HEK293T (cell line): ENCODE measurements at regions of chr2 and their contacts with region 1.

Region 1: GRCh38 chr2:24827321-24828237 is 34.4 kb downstream of the CENPO start:
- DNase-seq: peak; percentile 81

Region 2: DNA sequence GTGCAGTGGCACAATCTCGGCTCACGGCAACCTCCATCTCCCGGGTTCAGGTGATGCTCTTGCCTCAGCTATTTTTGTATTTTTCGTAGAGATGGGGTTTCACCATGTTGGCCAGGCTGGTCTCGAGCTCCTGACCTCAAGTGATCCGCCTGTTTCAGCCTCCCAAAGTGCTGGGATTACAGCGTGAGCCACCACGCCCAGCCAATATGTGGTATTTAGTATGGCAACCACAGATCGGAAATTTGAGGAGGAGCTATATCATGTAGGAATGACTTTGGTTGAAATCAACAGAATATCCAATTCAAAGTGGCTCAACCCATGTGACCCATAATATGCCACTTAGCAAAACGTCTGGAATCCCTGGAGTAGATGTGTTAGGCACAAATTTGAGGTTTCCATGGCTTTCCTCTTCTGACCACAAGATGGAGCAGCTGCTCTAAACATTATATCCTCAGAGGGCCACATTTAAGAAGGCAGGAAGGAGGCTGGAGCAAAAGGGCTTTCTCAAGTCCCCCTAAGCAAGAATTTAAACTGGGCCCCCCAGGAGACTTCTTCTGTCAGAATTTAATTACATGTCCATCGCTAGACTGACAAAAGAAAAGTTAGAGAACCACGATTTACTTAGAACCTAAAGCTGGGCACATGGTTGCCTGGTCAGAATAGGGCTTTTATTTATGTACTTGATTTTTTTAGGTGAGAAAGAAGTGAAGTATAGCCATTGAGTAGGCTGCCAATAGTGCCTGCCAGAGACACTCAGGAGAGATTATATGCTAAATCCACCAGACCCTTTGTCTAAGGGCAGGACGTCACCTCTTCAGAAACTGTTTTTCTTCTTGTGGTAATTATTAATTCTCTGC is 417.7 kb before region 1 on chr2:
- CTCF ChIA-PET with region 1: interaction called, 12 read pairs
- POLR2A ChIA-PET with region 1: interaction called, 3 read pairs
- DNase-seq: peak; percentile 73

Region 3: DNA sequence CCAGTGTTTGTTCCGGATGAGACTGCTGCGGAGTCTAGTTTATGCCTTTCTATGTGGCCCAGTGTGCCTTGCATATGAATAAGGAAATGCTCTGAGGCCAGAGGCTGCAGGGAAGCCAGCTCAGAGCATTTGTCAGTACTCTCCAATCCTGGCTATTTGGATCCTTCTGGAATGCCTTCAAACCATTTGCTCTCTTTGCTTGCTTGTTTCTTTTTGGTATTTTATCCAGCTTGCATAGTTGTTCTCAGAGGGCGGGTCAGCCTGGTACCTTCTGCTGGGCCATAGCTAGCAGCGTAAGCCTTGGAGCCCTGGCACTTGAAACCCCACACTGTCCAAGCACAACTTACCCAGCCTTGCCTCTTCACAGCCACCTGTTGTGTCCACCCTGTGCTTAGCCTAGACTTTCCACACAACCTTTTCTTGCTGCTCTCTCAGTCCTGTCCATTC is 13.9 kb before region 1 on chr2:
- CTCF ChIA-PET with region 1: no interaction called
- POLR2A ChIA-PET with region 1: no interaction called
- DNase-seq: no peak